Naive thymus-derived CD4-positive, alpha-beta T cell (primary cell): ENCODE measurements at regions of chr17 and their contacts with region 1.

Region 1: DNA sequence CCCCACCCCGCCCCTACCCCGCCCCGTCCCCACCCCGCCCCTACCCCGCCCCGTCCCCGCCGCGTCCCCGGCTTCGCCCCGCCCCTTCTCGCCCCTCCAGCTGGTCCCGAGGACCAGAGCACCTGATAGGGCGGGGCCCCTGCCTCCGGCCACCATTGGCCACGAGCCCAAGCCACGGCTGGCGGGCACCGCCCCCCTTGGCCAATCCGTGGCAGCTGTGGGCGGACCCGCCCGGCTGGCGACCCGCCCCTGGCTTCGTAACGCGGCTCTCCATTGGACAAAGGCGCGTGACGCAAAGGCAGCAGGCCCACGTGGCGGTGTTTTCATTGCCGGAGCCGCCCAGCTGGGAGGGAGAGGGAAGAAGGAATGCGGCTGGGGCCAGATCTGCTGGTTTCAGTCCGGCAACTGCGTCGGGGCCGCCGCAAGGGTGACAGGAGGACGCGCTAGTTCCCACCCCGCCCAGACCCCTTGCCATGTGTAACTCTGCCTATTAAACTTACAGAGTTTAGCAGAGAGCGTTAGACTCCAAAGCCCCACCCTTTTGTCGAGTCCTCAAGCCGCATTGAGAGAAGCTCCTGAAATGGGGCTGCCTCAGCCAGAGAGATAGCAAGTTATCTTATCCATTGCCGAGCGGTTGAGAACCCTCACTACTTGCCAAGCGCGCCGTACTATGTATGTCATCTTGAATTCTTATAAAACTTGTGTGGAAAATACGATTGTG is 403 bp upstream of the WIPI1 start:
- DNase-seq: peak; percentile 96 to 99 (median 97)
- ATAC-seq: peak; percentile 98
- H3K4me3 ChIP-seq: peak overlapping the region; percentile 52
- H3K4me3 Mint-ChIP-seq: peak overlapping the region; percentile 68 to 87 (median 84)
- H3K27ac ChIP-seq: peak overlapping the region; percentile 73
- H3K27ac Mint-ChIP-seq: peak overlapping the region; percentile 45 to 98 (median 91)
- H3K4me1 ChIP-seq: peaks cover 36 to 52% of the 10 kb centered on the region in 2 donors
- H3K4me1 Mint-ChIP-seq: peaks cover 26 to 66% (median 58%) of the 10 kb centered on the region in 7 donors
- H3K27me3 ChIP-seq: no peaks in the 10 kb centered on the region
- H3K27me3 Mint-ChIP-seq: no peaks in the 10 kb centered on the region

Region 2: GRCh38 chr17:67717624-67718329 is 739.9 kb before region 1 on chr17 and contains the start of gene NOL11:
- CTCF ChIA-PET with region 1: no interaction called
- POLR2A ChIA-PET with region 1: no interaction called
- intact Hi-C with region 1: loop called in 1 of 2 experiments (anchors 5 kb)
- DNase-seq: peak; percentile 97 to 100 (median 99)
- ATAC-seq: peak; percentile 98
- H3K4me3 ChIP-seq: peak within 1 kb of the TSS; percentile 96
- H3K4me3 Mint-ChIP-seq: peak within 1 kb of the TSS; percentile 95 to 100 (median 100)
- H3K27ac ChIP-seq: peak within 1 kb of the TSS; percentile 95
- H3K27ac Mint-ChIP-seq: peak within 1 kb of the TSS; percentile 96 to 100 (median 99)
- H3K4me1 ChIP-seq: peaks cover 14 to 20% of the 10 kb centered on the region in 2 donors
- H3K4me1 Mint-ChIP-seq: peaks cover 7 to 47% (median 28%) of the 10 kb centered on the region in 7 donors
- H3K27me3 ChIP-seq: no peaks in the 10 kb centered on the region
- H3K27me3 Mint-ChIP-seq: peaks cover 0 to 5% (median 0%) of the 10 kb centered on the region in 5 donors
- total RNA-seq, gene NOL11: 50.0 to 72.9 (median 65.1) TPM

Region 3: DNA sequence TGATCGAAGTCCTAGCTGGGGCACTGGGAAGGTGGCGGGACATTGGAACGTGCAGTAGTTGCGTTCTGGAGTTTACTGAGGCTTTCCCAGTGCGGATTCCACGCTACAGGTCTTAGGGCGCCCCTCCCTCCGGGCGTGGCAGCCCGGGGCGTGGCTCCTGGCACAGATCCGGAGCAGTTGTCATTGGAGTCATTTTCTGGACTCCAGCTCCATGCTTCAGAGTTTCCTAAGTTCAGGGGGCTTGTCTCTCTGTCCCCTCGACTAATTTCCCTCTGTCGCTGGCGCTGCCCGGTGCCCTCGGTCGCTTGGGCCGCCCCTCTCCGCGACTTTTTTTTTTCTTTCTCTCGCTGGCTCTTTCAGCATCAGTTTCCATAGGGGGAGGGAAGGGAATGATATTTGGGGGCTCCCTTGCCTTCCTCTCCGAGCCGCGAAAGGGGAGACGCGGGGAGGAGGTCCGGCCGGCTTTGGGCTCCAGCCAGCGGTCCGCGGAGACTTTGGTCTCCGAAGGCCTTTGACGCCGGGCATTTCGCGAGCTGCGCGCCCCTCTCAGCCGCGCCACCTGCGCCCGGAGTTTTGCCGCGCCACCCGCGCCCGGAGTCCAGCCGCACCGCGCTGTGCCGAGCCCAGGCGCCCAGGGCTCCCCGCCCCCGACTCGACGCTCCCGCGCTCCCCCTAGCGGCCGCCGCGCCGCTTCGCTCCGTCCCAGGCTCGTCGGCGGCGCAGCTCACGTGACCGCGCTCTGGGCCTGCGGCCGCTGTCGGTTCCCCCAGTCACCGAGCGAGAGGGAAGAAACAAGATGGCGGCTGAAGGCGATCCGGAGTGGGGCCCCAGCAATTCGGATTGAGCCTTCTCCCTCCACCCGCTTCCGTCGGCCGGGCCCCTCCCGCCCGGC is 632.7 kb before region 1 on chr17 and contains the start of gene BPTF:
- CTCF ChIA-PET with region 1: no interaction called
- POLR2A ChIA-PET with region 1: no interaction called
- intact Hi-C with region 1: loop called in 1 of 2 experiments (anchors 5 kb)
- DNase-seq: peak; percentile 84 to 95 (median 90)
- ATAC-seq: peak; percentile 93
- H3K4me3 ChIP-seq: peak within 1 kb of the TSS; percentile 77
- H3K4me3 Mint-ChIP-seq: peak within 1 kb of the TSS; percentile 85 to 99 (median 98)
- H3K27ac ChIP-seq: peak within 1 kb of the TSS; percentile 74
- H3K27ac Mint-ChIP-seq: peak within 1 kb of the TSS; percentile 96 to 99 (median 98)
- H3K4me1 ChIP-seq: peaks cover 17 to 28% of the 10 kb centered on the region in 2 donors
- H3K4me1 Mint-ChIP-seq: peaks cover 20 to 39% (median 33%) of the 10 kb centered on the region in 7 donors
- H3K27me3 ChIP-seq: no peaks in the 10 kb centered on the region
- H3K27me3 Mint-ChIP-seq: peaks cover 0 to 23% (median 0%) of the 10 kb centered on the region in 5 donors
- total RNA-seq, gene BPTF: 111 to 219 (median 163) TPM

Region 4: GRCh38 chr17:68057531-68057952 is 400.2 kb before region 1 on chr17:
- CTCF ChIA-PET with region 1: interaction called, 9 read pairs
- POLR2A ChIA-PET with region 1: no interaction called
- intact Hi-C with region 1: loop called in 1 of 2 experiments (anchors 2 kb)
- DNase-seq: peak in 7 of 9 donors; percentile 23 to 56 (median 44)
- ATAC-seq: peak; percentile 84
- H3K4me3 ChIP-seq: no peak overlapping the region
- H3K4me3 Mint-ChIP-seq: no peak overlapping the region
- H3K27ac ChIP-seq: no peak overlapping the region
- H3K27ac Mint-ChIP-seq: peak overlapping the region in 1 of 9 donors; percentile 49
- H3K4me1 ChIP-seq: no peaks in the 10 kb centered on the region
- H3K4me1 Mint-ChIP-seq: peaks cover 0 to 16% (median 10%) of the 10 kb centered on the region in 7 donors
- H3K27me3 ChIP-seq: no peaks in the 10 kb centered on the region
- H3K27me3 Mint-ChIP-seq: peaks cover 0 to 7% (median 0%) of the 10 kb centered on the region in 5 donors

Region 5: GRCh38 chr17:68238164-68238872 is 219.4 kb before region 1 on chr17:
- CTCF ChIA-PET with region 1: interaction called, 3 read pairs
- POLR2A ChIA-PET with region 1: interaction called, 3 read pairs
- intact Hi-C with region 1: loop called in 1 of 2 experiments (anchors 2 kb)
- DNase-seq: peak in 5 of 9 donors; percentile 12 to 70 (median 51)
- ATAC-seq: peak; percentile 8
- H3K4me3 ChIP-seq: peak overlapping the region; percentile 61
- H3K4me3 Mint-ChIP-seq: peak overlapping the region; percentile 77 to 91 (median 86)
- H3K27ac ChIP-seq: peak overlapping the region; percentile 79
- H3K27ac Mint-ChIP-seq: peak overlapping the region; percentile 94 to 99 (median 97)
- H3K4me1 ChIP-seq: peaks cover 21 to 61% of the 10 kb centered on the region in 2 donors
- H3K4me1 Mint-ChIP-seq: peaks cover 31 to 58% (median 41%) of the 10 kb centered on the region in 7 donors
- H3K27me3 ChIP-seq: no peaks in the 10 kb centered on the region
- H3K27me3 Mint-ChIP-seq: no peaks in the 10 kb centered on the region

Region 6: GRCh38 chr17:68356520-68356919 is 101.2 kb before region 1 on chr17:
- CTCF ChIA-PET with region 1: no interaction called
- POLR2A ChIA-PET with region 1: interaction called, 3 read pairs
- intact Hi-C with region 1: loop called in 1 of 2 experiments (anchors 2 kb)
- DNase-seq: peak in 8 of 9 donors; percentile 67 to 86 (median 80)
- ATAC-seq: peak; percentile 98
- H3K4me3 ChIP-seq: peak overlapping the region; percentile 33
- H3K4me3 Mint-ChIP-seq: peak overlapping the region; percentile 73 to 86 (median 80)
- H3K27ac ChIP-seq: peak overlapping the region; percentile 24
- H3K27ac Mint-ChIP-seq: peak overlapping the region; percentile 24 to 91 (median 82)
- H3K4me1 ChIP-seq: peaks cover 54 to 56% of the 10 kb centered on the region in 2 donors
- H3K4me1 Mint-ChIP-seq: peaks cover 43 to 69% (median 62%) of the 10 kb centered on the region in 7 donors
- H3K27me3 ChIP-seq: no peaks in the 10 kb centered on the region
- H3K27me3 Mint-ChIP-seq: no peaks in the 10 kb centered on the region